PC-9 (cell line): ENCODE measurements at regions of chr21 and their contacts with region 1.

Region 1: DNA sequence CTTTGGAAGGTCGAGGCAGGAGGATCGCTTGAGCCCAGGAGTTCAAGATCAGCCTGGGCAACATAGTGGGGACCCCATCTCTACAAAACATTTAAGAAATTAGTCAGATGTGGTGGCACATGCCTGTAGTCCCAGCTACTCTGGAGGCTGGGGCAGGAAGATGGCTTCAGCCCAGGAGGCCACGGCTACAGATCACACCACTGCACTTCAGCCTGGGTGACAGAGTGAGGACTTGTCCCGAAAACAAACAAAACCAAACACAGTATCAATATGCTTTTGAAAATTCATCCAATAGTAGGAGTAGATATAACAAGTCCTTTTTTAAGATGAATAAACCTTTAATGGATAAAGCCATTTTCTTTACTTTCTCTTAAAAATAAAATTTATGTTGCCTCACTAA is 8.5 kb downstream of the APP start:
- DNase-seq: no peak
- H3K4me3 ChIP-seq: no peak overlapping the region
- H3K27ac ChIP-seq: no peak overlapping the region
- H3K4me1 ChIP-seq: peaks cover 18% of the 10 kb centered on the region
- H3K27me3 ChIP-seq: no peaks in the 10 kb centered on the region
- CTCF ChIP-seq: no peak

Region 2: GRCh38 chr21:26140185-26140584 is 21.9 kb before region 1 on chr21:
- CTCF ChIA-PET with region 1: interaction called, 3 read pairs
- POLR2A ChIA-PET with region 1: no interaction called
- intact Hi-C with region 1: loop called (anchors 2 kb)
- DNase-seq: peak; percentile 51 to 90
- H3K4me3 ChIP-seq: no peak overlapping the region
- H3K27ac ChIP-seq: peak overlapping the region; percentile 69
- H3K4me1 ChIP-seq: peaks cover 39% of the 10 kb centered on the region
- H3K27me3 ChIP-seq: no peaks in the 10 kb centered on the region
- CTCF ChIP-seq: no peak